ENCODE measurements at regions of chr5 and their contacts with region 1.

Region 1: DNA sequence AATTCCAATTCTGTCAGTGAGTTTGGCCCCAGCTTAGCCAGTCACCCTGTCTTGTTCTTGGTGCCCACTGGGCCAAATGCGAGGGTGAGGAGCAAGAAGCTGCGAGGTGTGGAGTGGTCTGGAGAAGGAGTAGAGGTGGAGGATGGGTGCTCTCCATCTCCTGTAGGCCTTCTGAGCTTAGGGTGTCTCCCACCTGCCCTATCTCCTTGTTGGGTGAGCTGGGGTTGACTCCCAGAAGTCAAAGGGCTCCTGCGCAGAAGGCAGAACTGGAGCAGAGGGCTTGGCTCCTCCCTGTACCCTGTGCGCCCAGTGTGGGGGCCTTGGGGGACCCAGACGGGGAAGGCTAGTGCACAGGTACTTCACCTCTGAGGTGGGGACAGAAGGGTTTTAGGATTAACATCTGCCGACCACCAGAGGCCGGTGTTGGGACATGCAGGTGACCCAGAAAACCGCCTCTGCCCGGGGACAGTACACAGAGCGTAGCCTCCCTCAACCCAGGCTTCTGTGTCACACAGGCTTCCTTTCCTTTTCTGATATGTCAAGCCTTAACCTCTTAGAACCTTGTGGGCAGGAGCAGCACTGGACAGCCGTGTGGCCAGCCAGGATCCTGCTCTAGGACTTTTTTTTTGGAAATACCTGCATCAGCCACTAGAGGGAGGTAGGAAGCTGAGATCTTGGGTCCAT is 16.9 kb downstream of the IL5 start:
- DNase-seq: peak; percentile 48
- H3K4me3 Mint-ChIP-seq: no peak overlapping the region
- H3K27ac Mint-ChIP-seq: peak overlapping the region; percentile 26
- H3K4me1 Mint-ChIP-seq: peaks cover 64% of the 10 kb centered on the region
- H3K27me3 Mint-ChIP-seq: peaks cover under 1% of the 10 kb centered on the region

Region 2: GRCh38 chr5:132546108-132546507 is 19.7 kb after region 1 on chr5:
- intact Hi-C with region 1: loop called (anchors 1 kb)
- DNase-seq: no peak
- H3K4me3 Mint-ChIP-seq: no peak overlapping the region
- H3K27ac Mint-ChIP-seq: peak overlapping the region; percentile 15
- H3K4me1 Mint-ChIP-seq: peaks cover 38% of the 10 kb centered on the region
- H3K27me3 Mint-ChIP-seq: no peaks in the 10 kb centered on the region

Region 3: GRCh38 chr5:132576123-132576522 is 49.7 kb after region 1 on chr5:
- intact Hi-C with region 1: loop called (anchors 5 kb)
- DNase-seq: no peak
- H3K4me3 Mint-ChIP-seq: no peak overlapping the region
- H3K27ac Mint-ChIP-seq: peak overlapping the region; percentile 53
- H3K4me1 Mint-ChIP-seq: peaks cover 13% of the 10 kb centered on the region
- H3K27me3 Mint-ChIP-seq: no peaks in the 10 kb centered on the region

Region 4: GRCh38 chr5:132714456-132715307 is 188.2 kb after region 1 on chr5:
- intact Hi-C with region 1: loop called (anchors 1 kb)
- DNase-seq: no peak
- H3K4me3 Mint-ChIP-seq: peak overlapping the region; percentile 43
- H3K27ac Mint-ChIP-seq: no peak overlapping the region
- H3K4me1 Mint-ChIP-seq: peaks cover 15% of the 10 kb centered on the region
- H3K27me3 Mint-ChIP-seq: no peaks in the 10 kb centered on the region

Region 5: DNA sequence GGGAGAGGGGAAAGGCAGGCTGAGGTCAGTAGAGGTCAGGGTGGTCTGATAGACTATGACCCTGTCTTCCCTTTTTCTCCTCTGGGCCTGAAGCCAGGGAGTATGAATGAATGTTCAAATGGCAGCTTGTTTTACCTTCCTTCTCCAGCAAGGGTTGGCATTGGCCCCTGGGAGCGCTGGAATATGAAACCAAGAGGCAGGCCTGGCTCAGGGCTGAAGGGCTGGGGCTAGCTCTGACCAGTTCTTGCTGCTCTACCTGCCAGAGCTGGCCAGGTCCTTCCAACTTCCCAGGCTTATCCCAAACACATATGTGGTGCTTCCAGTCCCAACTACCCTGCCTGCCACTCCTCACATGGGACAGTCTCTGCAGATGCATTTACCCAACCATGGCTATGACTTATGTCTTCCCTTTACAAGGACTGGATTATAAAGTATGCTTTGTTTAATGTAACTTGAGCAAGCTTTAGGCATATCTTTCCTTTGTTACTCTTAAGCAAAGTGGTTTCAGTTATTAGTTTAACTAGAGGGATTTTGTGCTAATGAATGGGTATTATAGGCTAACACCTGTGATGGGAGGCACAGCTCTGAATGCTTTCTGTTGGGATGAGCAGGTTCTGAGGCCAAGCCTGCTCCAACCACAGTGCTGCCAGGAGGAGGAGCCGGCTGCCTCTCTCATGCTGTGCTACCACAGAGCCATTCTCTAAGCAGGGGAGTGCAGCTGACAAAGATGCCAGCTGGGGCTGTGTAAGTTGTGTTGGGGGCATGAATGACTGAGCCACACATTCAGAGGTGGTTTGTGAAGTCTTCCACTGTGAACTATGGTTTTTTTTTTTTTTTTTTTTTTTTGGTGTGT is 226.9 kb after region 1 on chr5:
- intact Hi-C with region 1: loop called (anchors 1 kb)
- DNase-seq: no peak
- H3K4me3 Mint-ChIP-seq: peak overlapping the region; percentile 35
- H3K27ac Mint-ChIP-seq: peak overlapping the region; percentile 90
- H3K4me1 Mint-ChIP-seq: peaks cover 72% of the 10 kb centered on the region
- H3K27me3 Mint-ChIP-seq: peaks cover 3% of the 10 kb centered on the region

Measured in activated T-helper 1 cell treated with anti-CD3 and anti-CD28 coated beads, Interleukin-12 subunit alpha, Interleukin-12 subunit beta, Interleukin-2, Interleukin-4 antibody, amounts not matched to agents 30 ng/mL and 10 ng/mL and 1 ng/mL, durations not matched to agents 14 hours and 24 hours and 36 hours (primary cell).